Posterior vena cava (tissue), 2 donors: ENCODE measurements at regions of chr12 and their contacts with region 1.

Region 1: GRCh38 chr12:25550186-25550585 is 2.9 kb downstream of the LMNTD1 start:
- DNase-seq: no peak

Region 2: GRCh38 chr12:25614813-25615518 is 64.8 kb after region 1 on chr12:
- intact Hi-C with region 1: loop called in 1 of 2 experiments (anchors 2 kb)
- DNase-seq: no peak